Heart left ventricle (tissue), 16 donors: ENCODE measurements at regions of chr20 and their contacts with region 1.

Region 1: DNA sequence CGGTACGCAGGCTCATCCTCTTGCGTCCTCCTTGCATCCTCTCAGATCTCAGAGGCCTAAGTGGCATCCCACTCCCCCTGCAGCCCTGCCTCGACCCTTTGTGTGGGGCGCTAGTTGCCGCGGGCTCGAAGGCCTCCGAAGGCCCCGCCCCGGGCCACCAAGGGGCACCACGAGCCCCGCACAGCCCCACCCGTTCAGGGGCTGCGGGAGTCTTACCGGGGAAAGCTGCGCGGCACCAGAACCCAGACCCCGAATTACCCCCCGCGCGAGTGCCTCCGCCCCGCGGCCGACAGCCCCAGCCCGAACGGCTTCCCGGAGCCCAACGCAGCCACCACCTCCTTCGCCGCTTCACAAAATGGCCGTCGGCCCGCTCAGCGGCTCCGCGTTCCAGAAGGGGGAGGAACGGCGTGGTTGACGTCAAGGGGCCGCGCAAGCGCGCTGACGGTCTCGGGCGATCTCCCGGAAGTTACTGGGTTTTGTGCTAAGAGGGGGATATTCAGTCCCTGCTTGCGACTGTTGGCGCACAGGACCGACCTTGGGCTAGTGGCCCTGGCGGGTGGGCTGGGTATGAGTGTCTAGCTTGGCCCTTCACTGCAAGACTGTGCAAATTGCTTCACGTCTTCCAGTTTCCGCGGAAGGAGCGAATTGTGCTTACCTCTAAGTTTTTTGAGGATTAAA is at the starts of genes CPNE1 and RBM12:
- DNase-seq: peak; percentile 93 to 96 (median 94)
- ATAC-seq: peak; percentile 88 to 97 (median 96)
- H3K4me3 ChIP-seq: peak within 1 kb of the TSS; percentile 74 to 95 (median 85)
- H3K27ac ChIP-seq: peak within 1 kb of the TSS; percentile 93 to 100 (median 98)
- H3K4me1 ChIP-seq: peaks cover 2 to 45% (median 34%) of the 10 kb centered on the region in 12 donors
- H3K27me3 ChIP-seq: no peaks in the 10 kb centered on the region
- CTCF ChIP-seq: peak in 2 of 12 donors; percentile 2 to 11
- POLR2A ChIP-seq: peak; percentile 64 to 90
- total RNA-seq, gene CPNE1: 25.7 to 75.6 (median 56.1) TPM
- total RNA-seq, gene RBM12: 15.8 to 61.7 (median 44.4) TPM

Region 2: GRCh38 chr20:35541783-35542588 is 122.7 kb before region 1 on chr20 and contains the start of gene ERGIC3:
- intact Hi-C with region 1: loop called in 1 of 10 experiments (anchors 10 kb)
- DNase-seq: peak; percentile 97 to 98 (median 98)
- ATAC-seq: peak; percentile 98 to 100 (median 100)
- H3K4me3 ChIP-seq: peak within 1 kb of the TSS; percentile 64 to 96 (median 88)
- H3K27ac ChIP-seq: peak within 1 kb of the TSS in 11 of 12 donors; percentile 23 to 83 (median 74)
- H3K4me1 ChIP-seq: peaks cover 0 to 18% (median 12%) of the 10 kb centered on the region in 12 donors
- H3K27me3 ChIP-seq: no peaks in the 10 kb centered on the region
- CTCF ChIP-seq: peak in 5 of 12 donors; percentile 10 to 42 (median 18)
- POLR2A ChIP-seq: peak in 1 of 2 donors; percentile 63
- total RNA-seq, gene ERGIC3: 83.9 to 152 (median 101) TPM

Region 3: GRCh38 chr20:35601008-35601973 is 63.4 kb before region 1 on chr20:
- intact Hi-C with region 1: loop called in 1 of 10 experiments (anchors 5 kb)
- DNase-seq: peak; percentile 63 to 89 (median 78)
- ATAC-seq: peak; percentile 76 to 91 (median 86)
- H3K4me3 ChIP-seq: peak overlapping the region; percentile 21 to 63 (median 52)
- H3K27ac ChIP-seq: no peak overlapping the region
- H3K4me1 ChIP-seq: peaks cover 3 to 19% (median 15%) of the 10 kb centered on the region in 12 donors
- H3K27me3 ChIP-seq: peaks cover 0 to 35% (median 13%) of the 10 kb centered on the region in 9 donors
- CTCF ChIP-seq: peak; percentile 24 to 73 (median 48)
- POLR2A ChIP-seq: no peak

Region 4: GRCh38 chr20:35625584-35626385 is 38.9 kb before region 1 on chr20:
- intact Hi-C with region 1: no loop called
- DNase-seq: no peak
- ATAC-seq: no peak
- H3K4me3 ChIP-seq: no peak overlapping the region
- H3K27ac ChIP-seq: no peak overlapping the region
- H3K4me1 ChIP-seq: no peaks in the 10 kb centered on the region
- H3K27me3 ChIP-seq: no peaks in the 10 kb centered on the region
- CTCF ChIP-seq: no peak
- POLR2A ChIP-seq: no peak